CD8-positive, alpha-beta memory T cell (primary cell): ENCODE measurements at regions of chr14 and their contacts with region 1.

Region 1: DNA sequence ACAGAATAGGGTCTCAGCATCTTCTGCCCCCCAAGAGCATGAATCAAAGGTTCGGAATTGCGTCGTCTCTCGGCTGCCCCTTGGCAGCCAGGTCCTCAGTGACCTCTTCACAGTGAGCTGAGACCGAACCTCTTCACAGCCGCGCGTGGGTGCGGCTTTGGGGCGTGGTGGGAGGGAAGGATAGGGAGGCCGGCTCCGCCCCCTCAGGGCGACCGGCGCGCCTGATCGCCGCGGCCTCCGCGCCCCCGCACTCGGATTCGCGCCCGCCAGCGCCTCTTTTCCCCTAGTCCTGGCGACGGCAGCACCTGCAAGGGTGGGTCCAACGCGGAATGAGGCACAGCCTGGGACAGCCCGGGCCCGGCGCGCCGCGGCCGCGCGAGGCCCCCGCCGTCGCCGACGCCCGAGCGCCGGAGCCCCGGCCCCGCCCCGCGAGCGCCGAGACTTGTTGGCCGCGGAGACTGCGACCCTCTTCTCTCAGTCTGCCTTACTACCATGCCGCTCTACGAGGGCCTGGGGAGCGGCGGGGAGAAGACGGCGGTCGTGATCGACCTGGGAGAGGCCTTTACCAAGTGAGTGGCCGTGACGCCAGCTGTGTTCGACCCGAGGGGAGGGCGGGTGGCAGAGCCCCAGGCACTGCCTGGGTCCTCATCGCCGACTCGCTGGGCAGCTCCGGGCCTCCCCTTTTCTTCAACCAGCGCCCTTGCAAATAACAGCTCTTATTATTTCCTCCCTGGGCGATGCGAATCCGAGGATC is at the start of gene ACTR10:
- DNase-seq: peak; percentile 77 to 91 (median 83)
- H3K4me3 ChIP-seq: peak within 1 kb of the TSS; percentile 72
- H3K4me3 Mint-ChIP-seq: peak within 1 kb of the TSS; percentile 90 to 98 (median 94)
- H3K27ac ChIP-seq: peak within 1 kb of the TSS; percentile 92
- H3K27ac Mint-ChIP-seq: peak within 1 kb of the TSS; percentile 93 to 99 (median 96)
- H3K4me1 ChIP-seq: peaks cover 29% of the 10 kb centered on the region
- H3K4me1 Mint-ChIP-seq: peaks cover 47 to 57% (median 52%) of the 10 kb centered on the region in 3 donors
- H3K27me3 ChIP-seq: no peaks in the 10 kb centered on the region
- H3K27me3 Mint-ChIP-seq: no peaks in the 10 kb centered on the region
- total RNA-seq, gene ACTR10: 38.7 to 41.5 TPM

Region 2: GRCh38 chr14:58177125-58177524 is 22.8 kb before region 1 on chr14:
- CTCF ChIA-PET with region 1: no interaction called
- POLR2A ChIA-PET with region 1: no interaction called
- DNase-seq: no peak
- H3K4me3 ChIP-seq: no peak overlapping the region
- H3K4me3 Mint-ChIP-seq: no peak overlapping the region
- H3K27ac ChIP-seq: no peak overlapping the region
- H3K27ac Mint-ChIP-seq: peak overlapping the region in 2 of 8 donors; percentile 38 to 59
- H3K4me1 ChIP-seq: no peaks in the 10 kb centered on the region
- H3K4me1 Mint-ChIP-seq: no peaks in the 10 kb centered on the region
- H3K27me3 ChIP-seq: no peaks in the 10 kb centered on the region
- H3K27me3 Mint-ChIP-seq: peaks cover 11 to 17% of the 10 kb centered on the region in 2 donors

Region 3: GRCh38 chr14:58244556-58245387 is 44.9 kb after region 1 on chr14 and contains the start of gene PSMA3:
- CTCF ChIA-PET with region 1: interaction called, 3 read pairs
- POLR2A ChIA-PET with region 1: interaction called, 16 read pairs
- DNase-seq: peak; percentile 95 to 98 (median 98)
- H3K4me3 ChIP-seq: peak within 1 kb of the TSS; percentile 99
- H3K4me3 Mint-ChIP-seq: peak within 1 kb of the TSS; percentile 87 to 100 (median 98)
- H3K27ac ChIP-seq: peak within 1 kb of the TSS; percentile 99
- H3K27ac Mint-ChIP-seq: peak within 1 kb of the TSS; percentile 96 to 100 (median 98)
- H3K4me1 ChIP-seq: peaks cover 32% of the 10 kb centered on the region
- H3K4me1 Mint-ChIP-seq: peaks cover 42 to 49% (median 42%) of the 10 kb centered on the region in 3 donors
- H3K27me3 ChIP-seq: no peaks in the 10 kb centered on the region
- H3K27me3 Mint-ChIP-seq: peaks cover 0 to 5% of the 10 kb centered on the region in 2 donors
- total RNA-seq, gene PSMA3: 334 to 343 TPM

Region 4: GRCh38 chr14:58258156-58258555 is 58.3 kb after region 1 on chr14:
- CTCF ChIA-PET with region 1: no interaction called
- POLR2A ChIA-PET with region 1: interaction called, 11 read pairs
- DNase-seq: no peak
- H3K4me3 ChIP-seq: no peak overlapping the region
- H3K4me3 Mint-ChIP-seq: no peak overlapping the region
- H3K27ac ChIP-seq: no peak overlapping the region
- H3K27ac Mint-ChIP-seq: peak overlapping the region in 3 of 8 donors; percentile 13 to 88 (median 61)
- H3K4me1 ChIP-seq: no peaks in the 10 kb centered on the region
- H3K4me1 Mint-ChIP-seq: peaks cover 18 to 22% (median 20%) of the 10 kb centered on the region in 3 donors
- H3K27me3 ChIP-seq: no peaks in the 10 kb centered on the region
- H3K27me3 Mint-ChIP-seq: no peaks in the 10 kb centered on the region